AG04449 (cell line): ENCODE measurements at regions of chr1 and their contacts with region 1.

Region 1: DNA sequence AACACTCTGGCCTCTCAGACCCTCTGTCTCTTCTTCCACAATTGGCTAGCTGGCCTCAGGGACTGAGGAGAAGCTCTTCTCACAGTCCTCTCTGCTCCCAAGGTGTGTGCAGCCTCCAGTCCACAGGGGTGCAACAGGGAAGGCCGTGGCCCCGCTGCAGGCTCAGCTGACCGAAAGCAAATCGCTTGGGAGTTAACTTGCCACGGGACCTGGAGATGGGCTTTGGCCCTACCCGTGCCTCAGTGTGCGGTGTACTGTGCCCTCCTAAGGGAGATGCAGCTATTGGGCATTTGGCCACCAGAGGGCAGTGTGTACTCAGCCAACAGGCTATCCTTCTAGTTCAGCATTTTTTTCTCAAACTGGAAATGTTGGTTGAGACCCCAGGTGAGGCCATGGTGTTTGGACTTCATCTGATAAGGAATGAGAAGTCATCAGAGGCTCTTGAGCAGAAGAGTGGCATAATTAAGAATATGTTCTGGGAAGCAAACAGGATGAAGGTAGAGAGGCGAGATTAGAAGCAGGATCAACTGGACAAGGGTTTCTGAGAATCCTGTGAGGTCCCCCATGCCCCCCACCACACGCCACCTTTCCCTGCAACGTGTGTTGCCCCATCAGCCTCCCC is 42.5 kb upstream of the TMEM125 start:
- DNase-seq: no peak
- H3K4me3 ChIP-seq: no peak overlapping the region
- CTCF ChIP-seq: peak; percentile 86

Region 2: DNA sequence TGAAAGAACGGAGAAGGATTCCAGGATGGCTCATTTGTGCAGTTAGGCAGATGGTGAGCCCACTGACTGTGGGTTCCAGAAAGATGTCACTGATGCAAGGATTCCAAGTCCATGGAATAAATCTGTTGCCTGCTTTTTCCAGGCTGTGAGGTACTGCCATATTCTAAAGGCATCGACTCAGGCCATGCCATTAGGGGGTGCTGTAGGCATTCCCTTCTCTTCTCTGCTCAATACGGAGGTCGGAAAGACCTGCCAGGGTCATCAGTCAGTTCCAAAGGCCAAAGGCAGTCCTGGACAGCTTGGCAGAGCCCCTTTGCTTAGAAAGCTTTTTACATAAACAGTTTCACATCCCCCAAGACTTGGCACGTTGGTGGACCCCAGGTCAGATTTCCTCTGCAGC is 10.8 kb after region 1 on chr1:
- CTCF ChIA-PET with region 1: interaction called, 45 read pairs
- POLR2A ChIA-PET with region 1: no interaction called
- DNase-seq: no peak
- H3K4me3 ChIP-seq: no peak overlapping the region
- CTCF ChIP-seq: peak; percentile 65

Region 3: GRCh38 chr1:43258370-43258769 is 31.1 kb after region 1 on chr1:
- CTCF ChIA-PET with region 1: no interaction called
- POLR2A ChIA-PET with region 1: no interaction called
- DNase-seq: no peak
- H3K4me3 ChIP-seq: no peak overlapping the region
- CTCF ChIP-seq: no peak

Region 4: DNA sequence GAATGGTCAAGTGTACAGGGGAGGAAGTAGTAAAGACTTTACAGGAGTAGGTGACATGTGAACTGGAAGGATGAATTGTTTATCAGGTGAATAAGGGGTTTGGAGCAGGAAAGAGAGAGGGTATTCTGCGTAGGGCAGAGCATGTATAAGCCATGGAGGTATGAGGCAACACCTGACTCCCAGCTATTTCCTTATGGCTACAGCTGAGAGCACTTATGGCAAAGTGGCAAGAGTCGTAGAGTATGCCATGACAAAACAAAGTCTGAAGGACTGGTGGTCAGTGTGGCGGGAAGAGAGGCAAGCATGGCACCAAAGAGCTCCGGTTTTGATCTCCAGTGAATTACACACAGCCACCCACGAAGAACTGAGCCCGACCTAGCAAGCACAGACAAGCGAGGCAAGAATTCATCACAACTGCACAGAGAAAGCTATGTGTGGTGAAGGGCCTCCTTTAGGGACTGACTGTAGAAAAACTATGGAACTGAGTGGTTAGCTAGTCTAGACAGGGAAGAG is 149.5 kb after region 1 on chr1:
- CTCF ChIA-PET with region 1: interaction called, 18 read pairs
- POLR2A ChIA-PET with region 1: interaction called, 3 read pairs
- DNase-seq: no peak
- H3K4me3 ChIP-seq: no peak overlapping the region
- CTCF ChIP-seq: no peak

Region 5: DNA sequence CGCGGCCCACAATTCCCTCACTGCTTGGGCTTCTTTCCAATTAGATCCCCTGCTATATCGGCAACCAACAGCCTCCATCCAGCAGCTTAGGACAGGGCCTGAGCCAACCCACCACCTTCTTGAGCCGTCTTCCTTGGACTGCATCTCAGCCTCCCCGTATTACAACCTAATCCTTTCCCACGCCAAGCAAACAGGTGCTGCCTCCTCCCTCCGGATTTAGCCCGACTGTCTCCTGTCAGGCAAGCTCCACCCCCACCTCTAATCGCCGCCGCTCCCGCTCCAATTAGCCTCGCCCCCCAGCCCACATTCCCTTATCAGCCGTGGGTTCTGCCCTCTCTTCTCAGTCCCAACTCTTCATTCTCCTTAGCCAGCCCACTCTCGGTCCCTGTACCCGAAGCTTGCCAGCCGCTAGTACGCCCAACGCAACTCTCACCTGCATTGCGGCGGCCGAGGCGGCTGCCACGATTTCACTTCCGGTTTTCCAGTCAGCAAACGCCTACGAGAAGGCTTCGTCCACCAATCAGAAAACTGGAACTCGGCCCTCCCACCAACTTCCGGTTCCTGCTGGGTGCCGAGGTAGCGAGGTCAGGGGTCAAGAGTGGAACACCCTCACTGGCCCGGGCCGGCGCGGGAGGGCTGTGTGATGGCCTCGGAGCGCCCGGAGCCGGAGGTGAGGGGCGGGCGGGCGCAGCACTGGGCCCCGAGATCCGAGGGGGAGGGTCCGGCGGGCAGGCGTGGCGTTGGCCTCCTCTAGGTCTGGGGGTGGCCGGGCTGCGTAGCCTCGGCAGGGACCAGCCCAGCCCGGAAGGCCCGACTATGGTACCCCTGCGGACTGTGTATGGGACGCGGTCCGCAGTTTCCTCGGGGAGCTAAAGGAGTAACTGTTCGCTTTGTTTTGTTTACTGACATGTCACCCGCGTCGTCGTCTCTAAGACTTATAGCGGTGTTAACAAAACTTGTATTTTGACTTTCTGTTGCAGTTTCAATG is 162.4 kb after region 1 on chr1 and contains the starts of genes MED8 and SZT2:
- CTCF ChIA-PET with region 1: interaction called, 32 read pairs
- POLR2A ChIA-PET with region 1: no interaction called
- DNase-seq: peak; percentile 40
- H3K4me3 ChIP-seq: peak within 1 kb of the TSS; percentile 98
- CTCF ChIP-seq: no peak

Region 6: DNA sequence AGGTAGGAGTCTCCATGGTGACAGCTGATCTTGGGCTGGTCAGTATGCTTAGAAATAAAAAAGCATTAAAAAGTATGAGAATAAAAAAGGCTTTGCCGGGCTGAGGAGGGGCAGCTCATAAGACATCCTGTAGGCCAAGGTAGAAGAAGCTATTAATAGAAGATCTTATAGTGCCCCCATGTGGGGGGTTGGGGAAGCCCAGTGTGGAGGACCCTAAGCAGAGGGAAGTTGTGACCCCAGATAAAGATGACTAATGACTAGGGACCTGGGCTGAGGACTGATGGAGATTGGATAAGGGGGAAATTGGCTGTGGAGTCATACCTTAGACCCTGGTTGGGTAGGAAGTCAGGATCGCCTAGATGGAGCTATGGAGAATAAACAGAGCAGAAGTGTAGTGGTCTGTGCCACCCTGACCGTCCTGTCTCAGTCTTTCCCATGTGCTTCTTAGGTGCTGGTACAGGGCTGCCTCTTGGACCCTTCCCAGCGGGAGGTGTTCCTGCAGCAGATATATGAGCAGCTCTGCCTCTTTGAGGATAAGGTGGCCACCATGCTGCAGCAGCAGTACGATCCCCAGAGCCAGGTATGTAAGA is 187.5 kb after region 1 on chr1:
- CTCF ChIA-PET with region 1: interaction called, 184 read pairs
- POLR2A ChIA-PET with region 1: interaction called, 3 read pairs
- DNase-seq: no peak
- H3K4me3 ChIP-seq: no peak overlapping the region
- CTCF ChIP-seq: peak; percentile 30

Region 7: GRCh38 chr1:43454266-43455011 is 227.2 kb after region 1 on chr1:
- CTCF ChIA-PET with region 1: interaction called, 12 read pairs
- POLR2A ChIA-PET with region 1: no interaction called
- DNase-seq: peak; percentile 36
- H3K4me3 ChIP-seq: peak overlapping the region; percentile 56
- CTCF ChIP-seq: no peak